WTC11 (cell line): ENCODE measurements at regions of chr17 and their contacts with region 1.

Region 1: DNA sequence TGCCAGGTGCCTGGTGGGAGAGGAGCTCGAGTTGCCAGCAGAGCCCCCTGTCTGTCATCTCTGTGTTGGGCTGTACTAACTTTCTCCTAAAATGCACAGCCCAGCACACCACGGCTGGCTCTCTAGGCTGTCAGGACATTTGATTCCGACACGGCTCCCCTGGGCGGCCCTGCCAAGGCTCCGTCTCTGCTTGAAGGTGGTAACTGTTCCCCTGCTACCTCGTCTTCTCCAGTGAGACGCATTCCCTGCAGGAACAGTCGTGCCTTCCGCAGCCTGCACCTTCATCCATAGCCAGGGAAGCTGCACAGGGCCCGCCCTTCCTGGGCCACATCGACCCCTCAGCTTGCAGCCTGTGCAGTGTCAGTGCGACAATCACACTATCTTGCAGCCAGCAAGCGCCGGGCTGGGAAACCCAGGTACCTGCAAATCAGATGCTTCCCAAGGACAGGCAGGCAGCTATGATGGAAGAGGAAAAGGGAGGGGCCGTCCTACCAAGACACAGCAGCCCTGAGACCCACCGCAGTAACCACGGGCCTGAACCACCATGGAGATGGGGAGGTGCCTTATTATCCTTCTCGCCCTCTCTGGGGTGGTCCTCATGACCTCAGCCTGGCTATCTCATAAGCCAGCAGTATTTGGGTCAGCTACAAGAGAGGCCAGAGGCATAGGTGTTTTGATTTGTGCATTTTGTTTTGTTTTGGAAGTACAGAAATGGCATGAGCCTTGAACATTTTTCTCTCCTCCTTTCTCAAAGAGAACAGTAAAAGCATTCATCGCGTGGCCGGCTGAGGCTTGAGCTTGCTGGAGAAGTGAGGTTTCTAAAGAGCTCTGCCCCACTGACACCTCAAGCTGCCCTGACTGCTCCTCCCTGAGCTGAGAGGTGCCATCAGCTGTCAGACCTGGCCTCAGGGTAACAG is 361.7 kb upstream of the TNRC6C start:
- DNase-seq: no peak
- ATAC-seq: no peak
- H3K4me3 Mint-ChIP-seq: no peak overlapping the region
- H3K27ac Mint-ChIP-seq: no peak overlapping the region
- H3K4me1 Mint-ChIP-seq: 0 out of 2 replicates have a peak, but pooled peaks cover 4% of the 10 kb centered on the region
- H3K27me3 Mint-ChIP-seq: no peaks in the 10 kb centered on the region
- CTCF ChIP-seq: no peak

Region 2: DNA sequence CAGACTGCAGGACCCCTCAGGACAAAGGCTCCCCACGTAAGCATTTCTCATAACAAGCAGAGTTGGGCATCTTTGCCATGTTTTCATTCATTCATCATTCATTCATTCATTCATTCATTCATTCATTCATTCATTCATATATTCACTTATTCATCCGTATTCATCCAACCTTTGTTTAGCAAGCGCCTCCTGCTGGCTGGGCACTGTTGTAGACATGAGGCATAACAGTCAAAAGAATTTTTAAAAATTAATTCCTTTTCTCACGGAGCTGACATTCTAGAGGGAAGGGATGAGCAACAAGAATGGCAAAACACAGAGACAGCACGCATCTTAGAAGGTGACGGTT is 10.1 kb after region 1 on chr17:
- CTCF ChIA-PET with region 1: interaction called, 13 read pairs
- POLR2A ChIA-PET with region 1: no interaction called
- DNase-seq: no peak
- ATAC-seq: no peak
- H3K4me3 Mint-ChIP-seq: no peak overlapping the region
- H3K27ac Mint-ChIP-seq: no peak overlapping the region
- H3K4me1 Mint-ChIP-seq: no peaks in the 10 kb centered on the region
- H3K27me3 Mint-ChIP-seq: no peaks in the 10 kb centered on the region
- CTCF ChIP-seq: no peak